Activated CD4-positive, alpha-beta memory T cell treated with anti-CD3 and anti-CD28 coated beads, Interleukin-2, amount 10 ng/mL, durations not matched to agents 7 days and 5 days (primary cell): ENCODE measurements at regions of chr4 and their contacts with region 1.

Region 1: GRCh38 chr4:174591243-174592021 is 69.1 kb upstream of the HPGD start:
- DNase-seq: no peak
- H3K4me3 Mint-ChIP-seq: no peak overlapping the region
- H3K27ac Mint-ChIP-seq: peak overlapping the region; percentile 82
- H3K4me1 Mint-ChIP-seq: peaks cover 20% of the 10 kb centered on the region
- H3K27me3 Mint-ChIP-seq: peaks cover 4% of the 10 kb centered on the region

Region 2: GRCh38 chr4:174522183-174523048 is 69.0 kb before region 1 on chr4 and contains the start of gene HPGD:
- CTCF ChIA-PET with region 1: no interaction called
- POLR2A ChIA-PET with region 1: interaction called, 11 read pairs
- DNase-seq: peak; percentile 77
- H3K4me3 Mint-ChIP-seq: peak within 1 kb of the TSS; percentile 79
- H3K27ac Mint-ChIP-seq: peak within 1 kb of the TSS; percentile 84
- H3K4me1 Mint-ChIP-seq: peaks cover 39% of the 10 kb centered on the region
- H3K27me3 Mint-ChIP-seq: peaks cover 42% of the 10 kb centered on the region
- total RNA-seq, gene HPGD: 34.1 to 36.4 TPM

Region 3: DNA sequence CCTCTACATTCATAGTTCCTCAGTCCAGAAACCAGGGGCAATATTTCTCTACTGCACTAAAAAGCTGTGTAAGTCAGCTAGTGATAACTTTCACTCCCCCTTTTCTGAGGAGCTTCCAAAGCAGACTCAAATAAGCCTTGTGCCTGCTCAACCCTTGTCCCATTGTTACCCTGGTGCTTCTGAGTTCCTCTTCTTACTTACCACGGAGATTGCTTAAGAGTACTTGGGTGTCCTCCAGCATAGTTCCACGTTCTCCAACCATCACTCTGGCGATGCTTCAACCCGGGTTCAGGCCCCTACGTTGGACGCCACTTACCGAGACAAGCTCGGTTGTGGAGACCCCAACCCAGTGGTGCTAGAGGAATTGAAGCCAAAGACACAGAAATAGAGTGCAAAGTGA is 398.4 kb after region 1 on chr4:
- CTCF ChIA-PET with region 1: no interaction called
- POLR2A ChIA-PET with region 1: no interaction called
- DNase-seq: no peak
- H3K4me3 Mint-ChIP-seq: no peak overlapping the region
- H3K27ac Mint-ChIP-seq: no peak overlapping the region
- H3K4me1 Mint-ChIP-seq: no peaks in the 10 kb centered on the region
- H3K27me3 Mint-ChIP-seq: no peaks in the 10 kb centered on the region